Dorsolateral prefrontal cortex (tissue), 120 donors: ENCODE measurements at regions of chr16 and their contacts with region 1.

Region 1: DNA sequence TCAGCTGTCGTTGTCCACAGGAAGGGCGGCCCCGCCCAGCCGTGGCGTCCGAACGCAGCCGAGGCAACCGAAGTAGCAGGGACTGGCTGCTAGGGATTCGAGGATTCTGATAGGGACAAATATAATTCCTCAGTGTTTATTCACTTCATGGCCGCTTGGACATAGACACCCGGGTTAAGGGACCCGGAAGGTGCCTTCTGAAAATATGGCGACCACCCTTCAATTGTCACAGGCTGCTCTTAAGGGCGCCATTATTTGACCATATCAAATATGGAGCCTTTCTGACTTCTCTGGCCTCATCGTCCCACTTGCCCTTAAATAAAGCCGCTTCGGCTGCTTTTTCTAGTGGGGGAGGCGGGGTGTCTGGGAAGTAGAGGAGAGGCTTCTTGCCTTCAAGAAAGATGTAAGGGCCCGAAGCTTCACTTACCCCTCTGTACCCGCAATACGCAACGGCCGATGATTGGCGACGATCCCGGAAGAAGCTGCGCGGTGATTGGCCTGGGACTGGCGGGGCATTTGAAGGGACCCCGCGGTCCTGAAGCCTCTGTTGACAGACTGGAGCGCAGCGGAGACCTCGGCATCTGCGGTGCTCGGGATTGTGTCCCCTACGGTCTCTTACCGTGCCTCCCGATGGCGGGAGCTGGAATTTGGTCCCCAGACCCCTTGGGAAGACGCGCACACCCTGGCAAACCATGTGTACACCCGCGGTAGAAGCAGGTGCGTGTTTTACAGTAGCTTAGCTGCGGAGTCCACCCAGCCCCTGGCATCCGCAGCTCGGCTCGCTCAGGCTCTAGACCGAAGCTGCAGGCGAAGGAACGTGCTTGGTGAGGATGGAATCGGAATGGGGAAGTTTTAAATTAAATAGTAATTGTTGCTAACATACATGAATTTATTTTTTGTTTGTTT is at the start of gene ZNF688:
- DNase-seq: peak; percentile 88 to 96 (median 94)
- H3K4me3 ChIP-seq: peak within 1 kb of the TSS; percentile 46 to 96 (median 83)
- H3K27ac ChIP-seq: peak within 1 kb of the TSS; percentile 79 to 100 (median 99)
- H3K27me3 ChIP-seq: no peaks in the 10 kb centered on the region
- CTCF ChIP-seq: peak in 26 of 56 donors; percentile 9 to 60 (median 30)
- total RNA-seq, gene ZNF688: 9.8 to 27.9 (median 15.6) TPM

Region 2: DNA sequence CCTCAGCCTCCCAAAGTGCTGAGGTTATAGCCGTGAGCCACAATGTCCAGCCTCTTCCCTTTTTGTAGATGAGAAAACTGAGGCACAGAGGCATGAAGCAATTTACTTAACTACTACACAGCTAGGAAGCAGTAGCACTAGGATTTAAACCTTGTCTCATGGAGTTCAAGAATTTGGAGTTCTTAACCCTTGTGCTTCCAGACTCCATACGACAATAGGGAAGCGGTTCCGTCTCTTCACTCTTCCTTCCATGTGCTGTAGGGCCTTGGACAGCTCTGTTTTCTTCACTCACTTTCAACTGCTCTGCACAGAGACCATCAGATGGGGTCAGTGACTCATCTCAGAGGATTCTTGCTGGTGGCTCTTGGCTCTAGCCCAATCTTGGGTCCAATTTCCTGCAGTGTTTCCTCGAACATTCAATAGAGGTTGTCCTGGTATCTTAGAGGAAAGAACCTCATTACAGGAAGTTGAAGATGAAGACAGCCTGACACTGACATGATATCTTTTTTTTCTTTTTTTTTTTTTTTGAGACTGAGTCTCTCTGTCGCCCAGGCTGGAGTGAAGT is 80.1 kb before region 1 on chr16:
- intact Hi-C with region 1: no loop called
- DNase-seq: no peak
- H3K4me3 ChIP-seq: no peak overlapping the region
- H3K27ac ChIP-seq: no peak overlapping the region
- H3K27me3 ChIP-seq: peaks cover 0 to 9% (median 0%) of the 10 kb centered on the region in 45 donors
- CTCF ChIP-seq: no peak

Region 3: GRCh38 chr16:30534368-30535105 is 37.4 kb before region 1 on chr16 and contains the start of gene ZNF747:
- intact Hi-C with region 1: loop called (anchors 5 kb)
- DNase-seq: peak; percentile 91 to 97 (median 94)
- H3K4me3 ChIP-seq: peak within 1 kb of the TSS; percentile 61 to 97 (median 85)
- H3K27ac ChIP-seq: peak within 1 kb of the TSS; percentile 71 to 98 (median 92)
- H3K27me3 ChIP-seq: no peaks in the 10 kb centered on the region
- CTCF ChIP-seq: peak in 39 of 56 donors; percentile 6 to 54 (median 30)
- total RNA-seq, gene ZNF747: 9.2 to 17.9 (median 12.6) TPM

Region 4: GRCh38 chr16:30557957-30558788 is 13.8 kb before region 1 on chr16 and contains the start of gene ZNF764:
- intact Hi-C with region 1: loop called in 1 of 2 experiments (anchors 1 kb)
- DNase-seq: peak; percentile 97 to 99 (median 98)
- H3K4me3 ChIP-seq: peak within 1 kb of the TSS; percentile 72 to 100 (median 94)
- H3K27ac ChIP-seq: peak within 1 kb of the TSS; percentile 72 to 98 (median 94)
- H3K27me3 ChIP-seq: no peaks in the 10 kb centered on the region
- CTCF ChIP-seq: peak in 44 of 56 donors; percentile 5 to 67 (median 40)
- total RNA-seq, gene ZNF764: 8.2 to 19.0 (median 11.5) TPM

Region 5: GRCh38 chr16:30585400-30586189 is 13.6 kb after region 1 on chr16 and contains the start of gene ZNF785:
- intact Hi-C with region 1: loop called (anchors 1 kb)
- DNase-seq: peak; percentile 84 to 99 (median 96)
- H3K4me3 ChIP-seq: peak within 1 kb of the TSS; percentile 52 to 98 (median 85)
- H3K27ac ChIP-seq: peak within 1 kb of the TSS; percentile 66 to 98 (median 92)
- H3K27me3 ChIP-seq: no peaks in the 10 kb centered on the region
- CTCF ChIP-seq: peak; percentile 32 to 91 (median 74)
- total RNA-seq, gene ZNF785: 16.4 to 51.1 (median 30.1) TPM

Region 6: GRCh38 chr16:30609926-30610839 is 38.2 kb after region 1 on chr16 and contains the start of gene ZNF689:
- intact Hi-C with region 1: loop called in 1 of 2 experiments (anchors 5 kb)
- DNase-seq: peak; percentile 93 to 98 (median 96)
- H3K4me3 ChIP-seq: peak within 1 kb of the TSS; percentile 65 to 100 (median 93)
- H3K27ac ChIP-seq: peak within 1 kb of the TSS; percentile 27 to 99 (median 96)
- H3K27me3 ChIP-seq: no peaks in the 10 kb centered on the region
- CTCF ChIP-seq: peak in 25 of 56 donors; percentile 4 to 49 (median 27)
- total RNA-seq, gene ZNF689: 5.9 to 15.6 (median 8.8) TPM

Region 7: GRCh38 chr16:30657866-30658730 is 86.2 kb after region 1 on chr16 and contains the start of gene FBRS:
- intact Hi-C with region 1: loop called in 1 of 2 experiments (anchors 5 kb)
- DNase-seq: peak; percentile 99 to 100 (median 100)
- H3K4me3 ChIP-seq: peak within 1 kb of the TSS; percentile 63 to 97 (median 88)
- H3K27ac ChIP-seq: peak within 1 kb of the TSS; percentile 93 to 100 (median 100)
- H3K27me3 ChIP-seq: no peaks in the 10 kb centered on the region
- CTCF ChIP-seq: peak; percentile 57 to 96 (median 88)
- total RNA-seq, gene FBRS: 39.8 to 86.3 (median 56.3) TPM

Region 8: GRCh38 chr16:30761928-30762810 is 190.2 kb after region 1 on chr16 and contains the starts of genes CFAP119 and RNF40:
- intact Hi-C with region 1: loop called in 1 of 2 experiments (anchors 10 kb)
- DNase-seq: peak; percentile 92 to 98 (median 97)
- H3K4me3 ChIP-seq: peak within 1 kb of the TSS; percentile 66 to 99 (median 90)
- H3K27ac ChIP-seq: peak within 1 kb of the TSS in 58 of 59 donors; percentile 36 to 96 (median 86)
- H3K27me3 ChIP-seq: no peaks in the 10 kb centered on the region
- CTCF ChIP-seq: peak in 33 of 56 donors; percentile 4 to 48 (median 22)
- total RNA-seq, gene CFAP119: 3.6 to 27.3 (median 12.7) TPM
- total RNA-seq, gene RNF40: 72.0 to 128 (median 95.4) TPM

Region 9: GRCh38 chr16:30997887-30998711 is 426.2 kb after region 1 on chr16:
- intact Hi-C with region 1: no loop called
- DNase-seq: peak in 1 of 10 donors; percentile 47
- H3K4me3 ChIP-seq: peak overlapping the region in 12 of 59 donors; percentile 20 to 63 (median 52)
- H3K27ac ChIP-seq: peak overlapping the region in 36 of 59 donors; percentile 5 to 74 (median 38)
- H3K27me3 ChIP-seq: no peaks in the 10 kb centered on the region
- CTCF ChIP-seq: no peak